ENCODE measurements at regions of chr4 and their contacts with region 1.

Region 1: GRCh38 chr4:4289941-4290850 is at the starts of genes LYAR and ZBTB49:
- DNase-seq: peak; percentile 96 to 98
- ATAC-seq: peak; percentile 92 to 94 (median 93)
- H3K4me3 ChIP-seq: peak within 1 kb of the TSS; percentile 83
- H3K4me3 Mint-ChIP-seq: peak within 1 kb of the TSS; percentile 98
- H3K27ac ChIP-seq: peak within 1 kb of the TSS; percentile 75
- H3K27ac Mint-ChIP-seq: peak within 1 kb of the TSS; percentile 81 to 98
- H3K4me1 ChIP-seq: peaks cover 21% of the 10 kb centered on the region
- H3K4me1 Mint-ChIP-seq: peaks cover 49 to 67% of the 10 kb centered on the region in 2 donors
- H3K27me3 ChIP-seq: no peaks in the 10 kb centered on the region
- H3K27me3 Mint-ChIP-seq: no peaks in the 10 kb centered on the region
- CTCF ChIP-seq: no peak
- total RNA-seq, gene LYAR: 42.9 to 81.1 (median 55.8) TPM
- total RNA-seq, gene ZBTB49: 19.3 to 36.5 (median 30.0) TPM

Region 2: GRCh38 chr4:4248029-4248884 is 41.9 kb before region 1 on chr4 and contains the start of gene TMEM128:
- intact Hi-C with region 1: loop called (anchors 1 kb)
- DNase-seq: peak; percentile 93 to 97
- ATAC-seq: peak; percentile 94 to 97 (median 97)
- H3K4me3 ChIP-seq: peak within 1 kb of the TSS; percentile 68
- H3K4me3 Mint-ChIP-seq: peak within 1 kb of the TSS; percentile 97
- H3K27ac ChIP-seq: peak within 1 kb of the TSS; percentile 84
- H3K27ac Mint-ChIP-seq: peak within 1 kb of the TSS; percentile 99
- H3K4me1 ChIP-seq: peaks cover 12% of the 10 kb centered on the region
- H3K4me1 Mint-ChIP-seq: peaks cover 21 to 36% of the 10 kb centered on the region in 2 donors
- H3K27me3 ChIP-seq: no peaks in the 10 kb centered on the region
- H3K27me3 Mint-ChIP-seq: no peaks in the 10 kb centered on the region
- CTCF ChIP-seq: peak; percentile 16
- total RNA-seq, gene TMEM128: 9.3 to 12.2 (median 11.4) TPM

Region 3: DNA sequence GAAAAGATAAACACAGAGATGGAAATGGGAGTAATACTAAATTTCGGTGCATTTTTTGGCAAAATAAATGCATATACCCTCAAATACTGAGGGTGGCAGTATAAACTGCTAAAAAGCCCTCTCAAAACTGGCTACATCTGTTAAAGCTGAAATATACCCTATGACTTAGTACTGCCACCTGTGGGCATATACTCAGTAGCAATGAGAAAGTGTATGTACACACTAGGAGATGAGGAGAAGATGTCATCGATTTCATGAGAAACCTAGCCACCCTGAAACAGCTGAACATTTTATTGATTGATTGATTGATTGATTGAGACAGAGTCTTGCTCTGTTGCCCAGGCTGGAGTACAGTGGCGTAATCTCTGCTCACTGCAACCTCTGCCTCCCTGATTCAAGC is 29.9 kb before region 1 on chr4:
- intact Hi-C with region 1: loop called (anchors 1 kb)
- DNase-seq: peak in 1 of 2 donors; percentile 81
- ATAC-seq: peak; percentile 96 to 100 (median 100)
- H3K4me3 ChIP-seq: no peak overlapping the region
- H3K4me3 Mint-ChIP-seq: no peak overlapping the region
- H3K27ac ChIP-seq: peak overlapping the region; percentile 16
- H3K27ac Mint-ChIP-seq: peak overlapping the region; percentile 43 to 67
- H3K4me1 ChIP-seq: no peaks in the 10 kb centered on the region
- H3K4me1 Mint-ChIP-seq: peaks cover 16 to 27% of the 10 kb centered on the region in 2 donors
- H3K27me3 ChIP-seq: no peaks in the 10 kb centered on the region
- H3K27me3 Mint-ChIP-seq: no peaks in the 10 kb centered on the region
- CTCF ChIP-seq: peak; percentile 85

Region 4: DNA sequence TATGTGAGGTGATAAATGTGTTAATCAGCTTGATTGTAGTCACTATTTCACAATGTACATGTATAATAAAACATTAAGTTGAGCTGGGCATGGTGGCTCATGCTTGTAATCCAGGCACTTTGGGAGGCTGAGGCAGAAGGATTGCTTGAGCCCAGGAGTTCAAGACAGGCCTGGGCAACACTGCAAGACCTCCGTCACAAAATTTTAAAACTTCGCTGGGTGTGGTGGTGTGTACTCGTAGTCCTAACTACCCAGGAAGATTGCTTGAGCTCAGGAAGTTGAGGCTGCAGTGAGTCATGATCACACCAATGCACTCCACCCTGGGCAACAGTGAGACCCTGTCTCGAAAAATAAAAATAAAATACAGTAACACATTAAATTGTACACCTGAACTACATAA is 20.3 kb before region 1 on chr4:
- intact Hi-C with region 1: loop called (anchors 1 kb)
- DNase-seq: peak; percentile 64 to 71
- ATAC-seq: peak; percentile 74 to 89 (median 78)
- H3K4me3 ChIP-seq: peak overlapping the region; percentile 43
- H3K4me3 Mint-ChIP-seq: peak overlapping the region; percentile 85
- H3K27ac ChIP-seq: peak overlapping the region; percentile 97
- H3K27ac Mint-ChIP-seq: peak overlapping the region; percentile 95 to 96
- H3K4me1 ChIP-seq: peaks cover 43% of the 10 kb centered on the region
- H3K4me1 Mint-ChIP-seq: peaks cover 62 to 85% of the 10 kb centered on the region in 2 donors
- H3K27me3 ChIP-seq: no peaks in the 10 kb centered on the region
- H3K27me3 Mint-ChIP-seq: no peaks in the 10 kb centered on the region
- CTCF ChIP-seq: no peak

Region 5: GRCh38 chr4:5101571-5101970 is 811.4 kb after region 1 on chr4:
- intact Hi-C with region 1: no loop called
- DNase-seq: no peak
- ATAC-seq: no peak
- H3K4me3 ChIP-seq: no peak overlapping the region
- H3K4me3 Mint-ChIP-seq: no peak overlapping the region
- H3K27ac ChIP-seq: no peak overlapping the region
- H3K27ac Mint-ChIP-seq: no peak overlapping the region
- H3K4me1 ChIP-seq: no peaks in the 10 kb centered on the region
- H3K4me1 Mint-ChIP-seq: no peaks in the 10 kb centered on the region
- H3K27me3 ChIP-seq: no peaks in the 10 kb centered on the region
- H3K27me3 Mint-ChIP-seq: peaks cover 9 to 20% of the 10 kb centered on the region in 2 donors
- CTCF ChIP-seq: no peak